T-cell (primary cell): ENCODE measurements at regions of chr2 and their contacts with region 1.

Region 1: DNA sequence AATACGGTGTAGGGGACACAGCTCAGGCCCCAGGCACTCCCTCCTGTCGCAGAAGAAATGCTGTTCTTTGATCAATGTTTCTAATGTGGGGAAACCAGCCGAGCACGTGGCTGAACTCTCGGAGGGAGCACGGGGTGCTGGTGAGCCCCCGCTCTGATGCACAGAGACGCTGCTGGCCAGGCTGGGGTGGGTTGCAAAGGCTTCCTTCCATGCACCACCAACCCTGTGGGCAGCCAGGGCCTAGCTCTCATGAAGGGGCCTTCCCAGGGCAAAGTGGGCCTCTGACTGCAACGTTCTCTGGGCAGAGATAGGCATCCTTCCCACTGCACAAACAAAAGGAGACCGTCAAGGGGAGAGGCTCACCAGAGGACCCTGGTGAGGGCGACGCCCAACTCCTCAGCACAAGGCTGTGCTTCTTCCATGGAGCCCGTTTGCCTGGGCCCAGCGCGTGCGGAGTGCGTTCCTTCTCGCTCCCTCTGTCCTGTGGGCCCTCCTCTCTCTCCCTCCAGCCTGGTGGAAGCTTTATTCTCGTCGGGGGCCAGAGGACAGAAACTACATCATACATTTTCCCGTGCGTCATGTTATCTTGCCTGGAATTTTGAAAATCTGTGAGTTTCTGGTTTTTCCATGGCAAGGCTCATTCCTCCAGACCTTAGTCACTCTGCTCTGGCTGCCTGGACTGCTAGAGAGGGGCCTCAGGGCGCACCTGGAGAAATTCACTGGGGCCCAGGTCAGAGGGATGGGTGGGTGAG is 61.1 kb upstream of the SP3 start:
- DNase-seq: no peak
- ATAC-seq: no peak
- H3K4me3 ChIP-seq: no peak overlapping the region
- H3K4me3 Mint-ChIP-seq: no peak overlapping the region
- H3K27ac ChIP-seq: no peak overlapping the region
- H3K27ac Mint-ChIP-seq: no peak overlapping the region
- H3K4me1 ChIP-seq: no peaks in the 10 kb centered on the region
- H3K4me1 Mint-ChIP-seq: peaks cover 0 to under 1% (median 0%) of the 10 kb centered on the region in 3 donors
- H3K27me3 ChIP-seq: peaks cover 0 to 2% of the 10 kb centered on the region in 2 experiments
- H3K27me3 Mint-ChIP-seq: no peaks in the 10 kb centered on the region

Region 2: DNA sequence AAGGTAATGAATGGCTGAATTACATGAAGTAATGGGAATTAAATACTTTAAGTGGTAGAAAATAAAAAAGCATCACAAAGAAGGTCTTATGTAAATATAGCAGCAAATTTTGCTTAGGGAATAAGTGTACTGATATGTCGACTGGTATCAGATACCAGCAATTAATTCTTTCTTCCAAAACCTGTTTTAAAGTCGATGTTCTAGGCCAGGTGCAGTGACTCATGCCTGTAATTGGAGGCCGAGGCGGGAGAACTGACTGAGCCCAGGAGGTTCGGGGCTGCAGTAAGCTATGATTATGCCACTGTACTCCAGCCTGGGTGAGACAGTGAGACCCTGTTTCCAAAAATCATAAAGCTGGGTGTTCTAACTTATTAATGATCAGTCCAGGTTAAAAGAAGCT is 91.4 kb before region 1 on chr2:
- CTCF ChIA-PET with region 1: no interaction called
- POLR2A ChIA-PET with region 1: interaction called in 1 of 2 experiments, 12 read pairs
- DNase-seq: no peak
- ATAC-seq: peak in 1 of 4 experiments; percentile 35
- H3K4me3 ChIP-seq: no peak overlapping the region
- H3K4me3 Mint-ChIP-seq: no peak overlapping the region
- H3K27ac ChIP-seq: no peak overlapping the region
- H3K27ac Mint-ChIP-seq: peak overlapping the region in 1 of 2 donors; percentile 40
- H3K4me1 ChIP-seq: peaks cover 13 to 18% of the 10 kb centered on the region in 2 experiments
- H3K4me1 Mint-ChIP-seq: peaks cover 22 to 56% (median 45%) of the 10 kb centered on the region in 3 donors
- H3K27me3 ChIP-seq: no peaks in the 10 kb centered on the region
- H3K27me3 Mint-ChIP-seq: no peaks in the 10 kb centered on the region